Ovary (tissue), 10 donors: ENCODE measurements at regions of chr18 and their contacts with region 1.

Region 1: GRCh38 chr18:48777026-48777743 is 173.6 kb downstream of the SMAD7 start:
- DNase-seq: peak; percentile 58 to 77 (median 73)
- H3K4me3 ChIP-seq: no peak overlapping the region
- H3K27ac ChIP-seq: peak overlapping the region in 1 of 2 donors; percentile 55
- H3K4me1 ChIP-seq: peaks cover 26% of the 10 kb centered on the region
- H3K27me3 ChIP-seq: no peaks in the 10 kb centered on the region
- CTCF ChIP-seq: peak; percentile 71 to 82 (median 72)
- EP300 ChIP-seq: no peak
- POLR2A ChIP-seq: no peak

Region 2: DNA sequence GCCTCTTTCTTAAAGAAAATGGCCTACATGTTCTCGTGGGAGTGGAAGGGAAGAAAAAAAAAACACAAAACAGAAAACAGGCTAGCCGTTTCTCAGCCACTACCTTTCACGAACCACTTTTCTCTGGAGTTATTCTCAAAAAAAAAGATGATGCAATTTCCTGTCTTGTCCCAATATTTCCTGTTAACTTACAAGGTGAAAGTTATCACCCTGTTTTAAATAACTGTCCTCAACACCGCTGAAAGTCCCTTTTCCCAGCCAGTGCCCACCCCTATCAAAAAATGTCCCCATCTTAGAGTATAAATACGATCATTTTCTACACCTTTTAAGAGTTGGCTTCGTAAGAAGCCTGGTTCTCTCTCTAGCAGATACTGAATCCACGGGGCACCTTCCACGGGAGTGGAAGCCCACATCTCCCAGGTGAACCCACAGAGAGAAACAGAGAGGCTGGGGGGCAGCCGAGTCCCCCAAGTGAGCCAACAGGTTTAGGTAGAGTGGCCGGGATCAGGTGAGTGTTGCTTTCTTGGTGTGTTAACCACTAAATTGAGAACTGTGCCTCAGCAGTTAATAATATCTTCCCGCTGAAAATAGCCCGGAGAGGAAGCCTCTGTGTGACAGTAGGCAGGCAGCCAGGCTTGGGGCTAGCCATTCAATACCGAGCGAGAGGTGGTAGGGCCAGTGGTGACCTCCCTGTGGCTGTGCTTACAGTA is 157.7 kb after region 1 on chr18:
- intact Hi-C with region 1: loop called in 3 of 4 experiments (anchors 10 kb)
- DNase-seq: peak in 2 of 5 donors; percentile 47 to 54
- H3K4me3 ChIP-seq: no peak overlapping the region
- H3K27ac ChIP-seq: peak overlapping the region; percentile 83 to 91
- H3K4me1 ChIP-seq: peaks cover 42% of the 10 kb centered on the region
- H3K27me3 ChIP-seq: no peaks in the 10 kb centered on the region
- CTCF ChIP-seq: no peak
- EP300 ChIP-seq: no peak
- POLR2A ChIP-seq: no peak

Region 3: GRCh38 chr18:48951448-48952286 is 174.5 kb after region 1 on chr18:
- intact Hi-C with region 1: loop called in 2 of 4 experiments (anchors 10 kb)
- DNase-seq: peak; percentile 82 to 91 (median 89)
- H3K4me3 ChIP-seq: peak overlapping the region; percentile 77
- H3K27ac ChIP-seq: peak overlapping the region; percentile 91 to 96
- H3K4me1 ChIP-seq: peaks cover 11% of the 10 kb centered on the region
- H3K27me3 ChIP-seq: no peaks in the 10 kb centered on the region
- CTCF ChIP-seq: peak in 2 of 3 donors; percentile 50 to 73
- EP300 ChIP-seq: no peak
- POLR2A ChIP-seq: peak; percentile 59

Region 4: DNA sequence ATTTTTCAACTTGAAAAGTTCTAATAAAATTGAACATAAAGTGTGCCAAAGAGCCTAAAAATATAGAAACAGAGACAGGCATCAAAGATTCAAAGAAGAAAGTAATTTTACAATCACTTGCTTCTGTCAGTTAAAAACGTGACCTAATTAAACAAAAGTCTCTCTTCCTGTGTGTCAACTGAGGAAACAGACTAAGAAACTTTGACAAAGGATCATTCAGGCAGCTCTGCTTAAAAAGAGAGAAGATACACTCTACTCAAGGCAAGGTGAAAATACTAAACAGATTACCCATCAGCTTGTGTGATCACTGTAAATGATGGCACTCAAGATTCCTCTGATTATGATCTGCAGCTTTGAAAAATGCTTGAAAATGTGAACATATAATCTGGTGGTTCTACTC is 635.5 kb after region 1 on chr18:
- intact Hi-C with region 1: loop called in 1 of 4 experiments (anchors 10 kb)
- DNase-seq: no peak
- H3K4me3 ChIP-seq: no peak overlapping the region
- H3K27ac ChIP-seq: no peak overlapping the region
- H3K4me1 ChIP-seq: no peaks in the 10 kb centered on the region
- H3K27me3 ChIP-seq: no peaks in the 10 kb centered on the region
- CTCF ChIP-seq: no peak
- EP300 ChIP-seq: no peak
- POLR2A ChIP-seq: no peak

Region 5: DNA sequence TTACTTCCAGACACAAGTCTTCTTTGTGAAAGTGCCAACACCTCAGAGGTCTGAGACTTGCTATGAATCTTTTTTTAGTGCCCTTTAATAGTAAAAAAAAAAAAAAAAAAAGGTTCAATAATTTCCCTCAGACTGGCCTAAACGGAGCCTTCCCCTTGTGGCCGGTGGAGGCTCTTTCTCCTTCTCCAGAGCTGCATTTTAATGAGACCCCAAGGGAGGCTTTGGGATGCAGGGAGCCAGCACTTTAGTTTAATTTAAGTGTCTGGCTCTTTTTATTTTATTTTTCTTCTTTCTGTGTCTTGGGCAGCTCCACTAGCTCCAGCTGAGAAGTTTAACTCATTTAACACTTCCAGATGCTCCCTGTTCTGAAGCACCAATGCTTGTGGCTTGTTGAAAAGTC is 1714.9 kb after region 1 on chr18:
- intact Hi-C with region 1: no loop called
- DNase-seq: no peak
- H3K4me3 ChIP-seq: no peak overlapping the region
- H3K27ac ChIP-seq: no peak overlapping the region
- H3K4me1 ChIP-seq: no peaks in the 10 kb centered on the region
- H3K27me3 ChIP-seq: no peaks in the 10 kb centered on the region
- CTCF ChIP-seq: no peak
- EP300 ChIP-seq: no peak
- POLR2A ChIP-seq: no peak